GM12878 (cell line): ENCODE measurements at regions of chrX and their contacts with region 1.

Region 1: GRCh38 chrX:10077425-10078188 is 79.2 kb upstream of the CLCN4 start:
- DNase-seq: no peak
- ATAC-seq: peak; percentile 48; the same call in 2 of the 3 replicates
- H3K4me3 ChIP-seq: no peak overlapping the region
- H3K27ac ChIP-seq: no peak overlapping the region
- H3K4me1 ChIP-seq: peaks cover 4% of the 10 kb centered on the region
- H3K27me3 ChIP-seq: no peaks in the 10 kb centered on the region
- CTCF ChIP-seq: 0 out of 6 replicates have a peak, but pooled peaks of 1 of the 3 experiments have one; percentile 2
- EP300 ChIP-seq: no peak
- POLR2A ChIP-seq: no peak
- RAD21 ChIP-seq: peak; percentile 23; the same call in 1 of the 2 replicates

Region 2: DNA sequence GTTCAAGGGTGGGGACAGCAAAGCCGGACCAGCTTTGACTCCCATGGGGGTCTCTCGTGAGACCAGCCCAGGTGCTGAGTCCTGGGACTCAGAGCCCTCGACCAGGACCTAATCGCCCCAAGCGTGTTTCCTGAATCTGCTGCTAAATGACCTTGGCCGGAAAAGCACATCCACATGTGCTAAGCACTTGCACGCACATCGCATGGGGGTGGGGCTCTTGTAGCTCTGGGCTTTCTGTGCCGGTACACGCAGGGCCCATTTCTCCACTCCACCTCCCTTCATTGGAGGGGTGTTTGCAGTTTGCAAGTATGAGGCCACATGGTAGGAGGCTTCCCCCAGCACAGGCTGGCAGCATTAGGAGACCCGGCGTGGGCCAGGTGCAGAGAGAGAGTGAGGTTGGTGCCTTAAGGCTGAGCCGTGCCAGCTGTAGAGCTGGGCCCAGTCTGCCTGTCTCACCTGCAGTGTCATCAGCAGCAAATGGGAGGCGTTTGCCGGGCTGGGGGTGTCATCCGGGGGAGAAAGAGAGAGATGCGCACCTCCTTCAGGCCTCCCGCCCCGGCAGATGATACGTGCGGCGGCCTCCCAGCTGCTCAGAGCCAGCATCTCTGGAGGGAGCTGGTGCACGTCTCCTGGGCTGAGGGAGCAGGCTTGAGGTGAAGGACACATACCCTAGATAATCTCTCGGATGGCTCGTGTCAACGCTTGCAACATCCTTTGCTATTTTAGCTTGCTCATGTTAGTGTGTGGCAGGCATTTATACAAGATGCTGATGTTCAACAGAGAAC is 33.9 kb after region 1 on chrX:
- CTCF ChIA-PET with region 1: interaction called, 56 read pairs
- POLR2A ChIA-PET with region 1: interaction called, 22 read pairs
- RAD21 ChIA-PET with region 1: interaction called, 89 read pairs
- SMC1A ChIA-PET with region 1: interaction called, 206 read pairs
- in situ Hi-C with region 1: no loop called
- intact Hi-C with region 1: no loop called
- DNase-seq: peak; percentile 59
- ATAC-seq: peak; percentile 69
- H3K4me3 ChIP-seq: peak overlapping the region; percentile 18; the same call in 1 of the 2 replicates
- H3K27ac ChIP-seq: peak overlapping the region; percentile 87
- H3K4me1 ChIP-seq: peaks cover 47% of the 10 kb centered on the region
- H3K27me3 ChIP-seq: no peaks in the 10 kb centered on the region; a peak in 1 of 4 replicates
- CTCF ChIP-seq: no peak
- EP300 ChIP-seq: peak; percentile 46 to 63; a peak in 3 of 4 replicates
- POLR2A ChIP-seq: peak; percentile 60
- RAD21 ChIP-seq: no peak